Activated T-helper 2 cell treated with anti-CD3 and anti-CD28 coated beads, Interferon-gamma antibody, Interleukin-2, Interleukin-4, amounts not matched to agents 10 μg/mL and 5 μg/mL and 100 μg/mL, durations not matched to agents 14 hours and 24 hours and 36 hours (primary cell): ENCODE measurements at regions of chr6 and their contacts with region 1.

Region 1: GRCh38 chr6:27893059-27893835 is 18.9 kb downstream of the OR2B2 start:
- DNase-seq: peak; percentile 94
- H3K4me3 Mint-ChIP-seq: no peak overlapping the region
- H3K27ac Mint-ChIP-seq: no peak overlapping the region
- H3K4me1 Mint-ChIP-seq: peaks cover 39% of the 10 kb centered on the region
- H3K27me3 Mint-ChIP-seq: no peaks in the 10 kb centered on the region

Region 2: GRCh38 chr6:26156076-26156849 is 1737.0 kb before region 1 on chr6:
- intact Hi-C with region 1: loop called (anchors 2 kb)
- DNase-seq: peak; percentile 91
- H3K4me3 Mint-ChIP-seq: peak overlapping the region; percentile 90
- H3K27ac Mint-ChIP-seq: peak overlapping the region; percentile 96
- H3K4me1 Mint-ChIP-seq: peaks cover 44% of the 10 kb centered on the region
- H3K27me3 Mint-ChIP-seq: no peaks in the 10 kb centered on the region

Region 3: DNA sequence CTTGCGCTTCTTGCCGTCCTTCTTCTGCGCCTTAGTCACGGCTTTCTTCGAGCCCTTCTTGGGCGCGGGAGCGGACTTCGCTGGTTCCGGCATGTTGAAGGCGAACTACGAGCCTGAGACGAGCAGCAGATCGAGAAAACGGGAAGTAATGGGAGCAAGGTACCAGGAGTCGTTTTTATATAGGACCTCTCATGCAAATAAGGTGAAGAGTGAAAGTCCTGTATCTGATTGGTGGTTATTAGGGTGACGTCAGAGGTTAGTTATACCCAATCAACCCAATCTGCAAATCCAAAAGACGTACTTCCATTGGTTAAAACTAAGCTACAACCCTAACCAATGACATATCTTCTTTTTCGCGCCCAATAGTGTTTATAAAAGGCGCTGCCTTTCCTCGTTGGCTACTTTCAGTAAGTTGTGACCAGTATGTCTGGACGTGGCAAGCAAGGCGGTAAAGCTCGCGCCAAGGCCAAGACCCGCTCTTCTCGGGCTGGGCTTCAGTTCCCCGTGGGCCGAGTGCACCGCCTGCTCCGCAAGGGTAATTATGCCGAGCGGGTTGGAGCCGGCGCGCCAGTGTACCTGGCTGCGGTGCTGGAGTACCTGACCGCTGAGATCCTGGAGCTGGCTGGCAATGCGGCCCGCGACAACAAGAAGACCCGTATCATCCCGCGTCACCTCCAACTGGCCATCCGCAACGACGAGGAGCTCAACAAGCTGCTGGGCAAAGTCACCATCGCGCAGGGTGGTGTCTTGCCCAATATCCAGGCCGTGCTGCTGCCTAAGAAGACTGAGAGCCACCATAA is 746.3 kb before region 1 on chr6:
- intact Hi-C with region 1: loop called (anchors 2 kb)
- DNase-seq: peak; percentile 84
- H3K4me3 Mint-ChIP-seq: no peak overlapping the region
- H3K27ac Mint-ChIP-seq: no peak overlapping the region
- H3K4me1 Mint-ChIP-seq: peaks cover 12% of the 10 kb centered on the region
- H3K27me3 Mint-ChIP-seq: no peaks in the 10 kb centered on the region

Region 4: GRCh38 chr6:27687154-27688013 is 205.9 kb before region 1 on chr6:
- intact Hi-C with region 1: loop called (anchors 10 kb)
- DNase-seq: peak; percentile 73
- H3K4me3 Mint-ChIP-seq: peak overlapping the region; percentile 88
- H3K27ac Mint-ChIP-seq: peak overlapping the region; percentile 68
- H3K4me1 Mint-ChIP-seq: peaks cover 16% of the 10 kb centered on the region
- H3K27me3 Mint-ChIP-seq: peaks cover 17% of the 10 kb centered on the region

Region 5: DNA sequence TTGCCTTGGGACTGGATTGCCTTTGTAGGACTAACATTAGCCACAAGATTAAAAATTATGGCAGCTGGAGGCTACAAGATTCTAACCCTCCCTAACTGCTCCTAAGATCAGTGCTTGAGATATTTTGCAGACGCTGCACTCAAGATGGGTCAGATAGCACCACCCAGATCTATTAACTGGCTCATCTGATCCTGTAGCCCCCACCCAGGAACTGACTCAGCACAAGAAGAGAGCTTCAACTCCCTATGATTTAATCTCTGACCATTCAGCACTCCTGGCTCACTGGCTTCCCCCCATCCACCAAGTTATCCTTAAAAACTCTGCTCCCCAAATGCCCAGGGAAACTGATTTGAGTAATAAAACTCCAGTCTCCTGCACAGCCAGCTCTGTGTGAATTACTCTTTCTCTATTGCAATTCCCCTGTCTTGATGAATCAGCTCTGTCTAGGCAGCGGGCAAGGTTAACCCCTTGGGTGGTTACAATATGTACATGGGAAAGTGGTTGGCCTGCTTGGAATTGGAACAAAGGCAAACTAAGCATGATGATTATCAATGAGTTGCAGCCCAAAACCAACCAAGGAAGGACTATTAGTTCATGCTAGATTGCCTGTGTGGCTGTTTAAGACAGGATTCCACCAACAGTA is 92.4 kb before region 1 on chr6:
- intact Hi-C with region 1: no loop called
- DNase-seq: no peak
- H3K4me3 Mint-ChIP-seq: no peak overlapping the region
- H3K27ac Mint-ChIP-seq: no peak overlapping the region
- H3K4me1 Mint-ChIP-seq: peaks cover 15% of the 10 kb centered on the region
- H3K27me3 Mint-ChIP-seq: peaks cover 8% of the 10 kb centered on the region

Region 6: DNA sequence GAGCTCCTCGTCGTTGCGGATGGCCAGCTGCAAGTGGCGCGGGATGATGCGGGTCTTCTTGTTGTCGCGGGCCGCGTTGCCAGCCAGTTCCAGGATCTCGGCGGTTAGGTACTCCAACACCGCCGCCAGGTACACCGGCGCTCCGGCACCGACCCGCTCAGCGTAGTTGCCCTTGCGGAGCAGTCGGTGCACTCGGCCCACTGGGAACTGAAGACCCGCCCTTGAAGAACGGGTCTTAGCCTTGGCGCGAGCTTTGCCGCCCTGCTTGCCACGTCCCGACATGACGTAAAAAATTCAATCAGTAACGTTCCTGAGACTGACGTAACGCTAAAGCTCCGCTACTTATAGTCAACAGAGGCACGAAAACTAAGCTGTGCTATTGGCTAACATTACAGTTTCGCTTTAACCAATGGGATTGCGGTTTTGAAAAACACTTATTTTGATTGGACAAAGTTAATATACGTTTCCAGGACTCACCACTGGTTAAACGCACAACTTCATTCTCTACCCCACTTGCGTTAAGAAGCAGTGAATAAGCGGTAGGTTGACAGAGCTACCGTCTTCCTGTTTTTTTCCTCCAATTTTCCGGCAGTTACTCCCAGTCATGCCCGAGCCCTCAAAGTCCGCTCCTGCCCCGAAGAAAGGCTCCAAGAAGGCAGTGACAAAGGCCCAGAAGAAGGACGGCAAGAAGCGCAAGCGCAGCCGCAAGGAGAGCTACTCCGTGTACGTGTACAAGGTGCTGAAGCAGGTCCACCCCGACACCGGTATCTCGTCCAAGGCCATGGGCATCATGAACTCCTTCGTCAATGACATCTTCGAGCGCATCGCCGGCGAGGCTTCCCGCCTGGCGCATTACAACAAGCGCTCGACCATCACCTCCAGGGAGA is 54.9 kb before region 1 on chr6:
- intact Hi-C with region 1: loop called (anchors 1 kb)
- DNase-seq: peak; percentile 85
- H3K4me3 Mint-ChIP-seq: no peak overlapping the region
- H3K27ac Mint-ChIP-seq: no peak overlapping the region
- H3K4me1 Mint-ChIP-seq: peaks cover 28% of the 10 kb centered on the region
- H3K27me3 Mint-ChIP-seq: no peaks in the 10 kb centered on the region

Region 7: DNA sequence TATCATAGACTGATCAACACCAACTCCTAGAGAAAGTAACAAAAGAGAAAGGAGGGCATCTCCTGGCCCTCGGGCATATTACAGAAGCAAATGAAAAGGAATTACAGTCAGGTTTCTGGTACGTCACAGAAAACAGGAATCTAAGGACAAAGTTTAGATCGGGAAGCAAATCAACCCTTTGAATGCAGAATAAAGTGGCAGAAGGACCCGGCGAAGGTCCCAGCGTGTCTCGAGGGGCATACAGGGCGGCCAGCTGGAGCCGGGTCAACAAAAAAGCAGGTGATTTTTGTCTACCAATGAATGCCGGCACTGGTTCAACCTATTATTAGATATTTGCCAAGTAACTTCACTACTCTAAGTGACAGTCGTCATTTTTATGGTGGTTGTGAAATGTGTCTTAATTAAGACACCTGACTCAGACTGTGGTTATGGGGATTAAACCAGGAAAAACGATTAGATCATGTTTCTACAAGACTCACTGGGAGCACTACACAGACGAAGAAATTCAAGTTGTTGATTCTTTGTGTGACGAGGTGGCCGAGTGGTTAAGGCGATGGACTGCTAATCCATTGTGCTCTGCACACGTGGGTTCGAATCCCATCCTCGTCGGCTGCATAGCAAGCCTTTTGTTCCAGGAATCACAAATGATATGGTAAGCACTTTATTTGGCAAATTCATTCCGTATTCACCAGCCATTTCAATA is 319.4 kb after region 1 on chr6:
- intact Hi-C with region 1: no loop called
- DNase-seq: peak; percentile 34
- H3K4me3 Mint-ChIP-seq: peak overlapping the region; percentile 76
- H3K27ac Mint-ChIP-seq: peak overlapping the region; percentile 47
- H3K4me1 Mint-ChIP-seq: peaks cover 30% of the 10 kb centered on the region
- H3K27me3 Mint-ChIP-seq: peaks cover 80% of the 10 kb centered on the region

Region 8: DNA sequence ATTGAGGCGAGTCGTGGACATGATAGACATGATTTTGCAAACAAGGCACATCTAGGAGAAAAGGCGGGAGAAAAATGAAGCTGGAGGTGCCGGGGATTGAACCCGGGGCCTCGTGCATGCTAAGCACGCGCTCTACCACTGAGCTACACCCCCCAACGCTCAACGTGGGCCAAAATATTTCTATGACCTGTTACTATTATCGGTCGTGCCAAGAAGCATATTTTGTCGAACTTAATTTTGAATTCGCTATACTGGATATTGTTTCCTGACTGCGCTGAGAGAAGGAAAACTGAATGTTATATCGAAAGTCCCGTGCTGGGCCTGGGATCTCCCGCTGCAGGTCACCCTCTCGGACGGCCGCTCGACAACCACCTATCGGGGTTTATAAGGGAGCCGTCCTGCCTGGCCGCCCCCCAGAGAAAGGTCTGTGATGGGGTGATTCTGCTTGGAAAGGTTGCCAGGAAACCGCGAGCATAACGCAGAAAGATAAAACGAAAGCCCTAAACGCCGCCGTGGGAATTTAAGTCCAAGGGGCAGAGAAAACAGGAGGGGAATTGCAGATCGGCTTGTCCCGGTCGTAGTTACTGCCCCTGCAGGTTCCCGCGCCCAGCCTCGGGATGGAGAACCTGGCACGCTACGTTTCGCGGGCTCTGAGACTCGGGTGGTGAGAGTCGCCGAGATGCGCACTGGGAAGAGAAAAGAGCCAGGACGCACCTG is 970.5 kb after region 1 on chr6:
- intact Hi-C with region 1: loop called (anchors 10 kb)
- DNase-seq: peak; percentile 78
- H3K4me3 Mint-ChIP-seq: peak overlapping the region; percentile 93
- H3K27ac Mint-ChIP-seq: peak overlapping the region; percentile 78
- H3K4me1 Mint-ChIP-seq: peaks cover 38% of the 10 kb centered on the region
- H3K27me3 Mint-ChIP-seq: peaks cover 18% of the 10 kb centered on the region